Naive thymus-derived CD4-positive, alpha-beta T cell (primary cell): ENCODE measurements at regions of chr21 and their contacts with region 1.

Region 1: GRCh38 chr21:14737922-14738321 is 191.8 kb upstream of the SAMSN1 start:
- DNase-seq: peak in 7 of 9 donors; percentile 54 to 80 (median 72)
- ATAC-seq: peak; percentile 94
- H3K4me3 ChIP-seq: no peak overlapping the region
- H3K4me3 Mint-ChIP-seq: peak overlapping the region in 1 of 10 donors; percentile 23
- H3K27ac ChIP-seq: no peak overlapping the region
- H3K27ac Mint-ChIP-seq: peak overlapping the region in 1 of 9 donors; percentile 7
- H3K4me1 ChIP-seq: peaks cover 0 to 6% of the 10 kb centered on the region in 2 donors
- H3K4me1 Mint-ChIP-seq: peaks cover 0 to 43% (median 8%) of the 10 kb centered on the region in 7 donors
- H3K27me3 ChIP-seq: no peaks in the 10 kb centered on the region
- H3K27me3 Mint-ChIP-seq: peaks cover 0 to 5% (median 3%) of the 10 kb centered on the region in 5 donors

Region 2: GRCh38 chr21:14251336-14251735 is 486.6 kb before region 1 on chr21:
- CTCF ChIA-PET with region 1: no interaction called
- POLR2A ChIA-PET with region 1: no interaction called
- intact Hi-C with region 1: loop called in 1 of 2 experiments (anchors 1 kb)
- DNase-seq: no peak
- ATAC-seq: no peak
- H3K4me3 ChIP-seq: no peak overlapping the region
- H3K4me3 Mint-ChIP-seq: no peak overlapping the region
- H3K27ac ChIP-seq: no peak overlapping the region
- H3K27ac Mint-ChIP-seq: no peak overlapping the region
- H3K4me1 ChIP-seq: no peaks in the 10 kb centered on the region
- H3K4me1 Mint-ChIP-seq: peaks cover 3 to 9% (median 5%) of the 10 kb centered on the region in 7 donors
- H3K27me3 ChIP-seq: peaks cover 0 to 5% of the 10 kb centered on the region in 2 donors
- H3K27me3 Mint-ChIP-seq: peaks cover 5 to 23% (median 13%) of the 10 kb centered on the region in 5 donors

Region 3: GRCh38 chr21:14448784-14449183 is 289.1 kb before region 1 on chr21:
- CTCF ChIA-PET with region 1: interaction called, 3 read pairs
- POLR2A ChIA-PET with region 1: no interaction called
- intact Hi-C with region 1: loop called (anchors 2 to 5 kb)
- DNase-seq: peak in 4 of 9 donors; percentile 2 to 15 (median 5)
- ATAC-seq: no peak
- H3K4me3 ChIP-seq: no peak overlapping the region
- H3K4me3 Mint-ChIP-seq: no peak overlapping the region
- H3K27ac ChIP-seq: no peak overlapping the region
- H3K27ac Mint-ChIP-seq: peak overlapping the region in 1 of 9 donors; percentile 23
- H3K4me1 ChIP-seq: peaks cover 0 to 4% of the 10 kb centered on the region in 2 donors
- H3K4me1 Mint-ChIP-seq: peaks cover 0 to 46% (median 0%) of the 10 kb centered on the region in 7 donors
- H3K27me3 ChIP-seq: no peaks in the 10 kb centered on the region
- H3K27me3 Mint-ChIP-seq: no peaks in the 10 kb centered on the region

Region 4: DNA sequence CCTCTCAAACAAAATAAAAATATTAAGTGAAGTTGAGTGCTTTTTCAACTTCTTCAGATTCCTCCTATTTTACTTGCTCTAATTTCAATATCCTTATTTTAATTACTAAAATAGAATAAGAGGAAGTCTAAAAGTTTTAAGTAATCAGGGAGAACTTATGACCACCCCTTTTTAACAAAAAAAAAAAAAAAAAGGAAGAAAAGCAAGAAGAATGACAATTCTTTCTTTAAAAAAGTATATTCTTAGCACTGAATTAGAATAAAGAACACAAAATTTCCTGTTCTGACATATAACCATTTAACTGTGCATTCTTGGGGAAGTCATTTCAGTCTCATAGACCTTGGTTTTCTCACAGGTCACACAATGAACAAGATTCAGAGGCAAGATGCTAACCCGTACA is 238.6 kb before region 1 on chr21:
- CTCF ChIA-PET with region 1: no interaction called
- POLR2A ChIA-PET with region 1: no interaction called
- intact Hi-C with region 1: loop called in 1 of 2 experiments (anchors 2 kb)
- DNase-seq: no peak
- ATAC-seq: no peak
- H3K4me3 ChIP-seq: no peak overlapping the region
- H3K4me3 Mint-ChIP-seq: no peak overlapping the region
- H3K27ac ChIP-seq: no peak overlapping the region
- H3K27ac Mint-ChIP-seq: no peak overlapping the region
- H3K4me1 ChIP-seq: no peaks in the 10 kb centered on the region
- H3K4me1 Mint-ChIP-seq: peaks cover 0 to 33% (median 9%) of the 10 kb centered on the region in 7 donors
- H3K27me3 ChIP-seq: no peaks in the 10 kb centered on the region
- H3K27me3 Mint-ChIP-seq: no peaks in the 10 kb centered on the region

Region 5: DNA sequence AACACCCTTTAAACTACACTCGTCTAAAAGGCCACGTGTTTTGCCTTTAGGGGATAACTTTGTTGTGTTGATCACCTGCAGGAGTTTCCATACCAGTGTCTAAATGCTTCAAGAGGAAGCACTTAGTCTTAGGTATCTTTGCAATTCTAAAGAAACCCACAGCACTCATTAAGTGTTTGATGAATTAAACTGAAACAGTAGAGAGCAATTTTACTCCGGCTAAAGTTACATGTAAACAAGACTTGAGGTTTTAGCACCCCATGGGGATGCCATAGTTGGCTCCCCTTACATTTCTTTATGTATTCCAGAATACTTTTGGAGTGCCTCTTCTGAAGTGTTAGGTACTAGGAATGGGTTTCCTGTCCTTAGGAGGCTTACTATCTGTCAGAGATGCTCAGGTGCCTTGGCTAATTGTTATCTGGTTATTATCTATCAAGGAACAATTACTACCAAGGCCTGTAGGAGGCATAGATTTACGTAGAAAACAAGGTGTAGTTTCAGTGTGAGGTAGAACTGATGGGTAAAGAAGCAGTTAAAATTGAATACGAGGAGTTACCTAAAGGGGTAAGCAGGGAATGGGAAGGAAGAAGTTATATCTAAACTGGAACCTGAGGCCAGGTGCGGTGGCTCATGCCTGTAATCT is 15.0 kb before region 1 on chr21:
- CTCF ChIA-PET with region 1: interaction called, 5 read pairs
- POLR2A ChIA-PET with region 1: no interaction called
- intact Hi-C with region 1: loop called in 1 of 2 experiments (anchors 1 kb)
- DNase-seq: no peak
- ATAC-seq: no peak
- H3K4me3 ChIP-seq: no peak overlapping the region
- H3K4me3 Mint-ChIP-seq: no peak overlapping the region
- H3K27ac ChIP-seq: no peak overlapping the region
- H3K27ac Mint-ChIP-seq: peak overlapping the region in 1 of 9 donors; percentile 71
- H3K4me1 ChIP-seq: no peaks in the 10 kb centered on the region
- H3K4me1 Mint-ChIP-seq: peaks cover 0 to 31% (median 5%) of the 10 kb centered on the region in 7 donors
- H3K27me3 ChIP-seq: no peaks in the 10 kb centered on the region
- H3K27me3 Mint-ChIP-seq: no peaks in the 10 kb centered on the region

Region 6: GRCh38 chr21:15094706-15095105 is 356.8 kb after region 1 on chr21:
- CTCF ChIA-PET with region 1: no interaction called
- POLR2A ChIA-PET with region 1: no interaction called
- intact Hi-C with region 1: no loop called
- DNase-seq: no peak
- ATAC-seq: no peak
- H3K4me3 ChIP-seq: no peak overlapping the region
- H3K4me3 Mint-ChIP-seq: no peak overlapping the region
- H3K27ac ChIP-seq: no peak overlapping the region
- H3K27ac Mint-ChIP-seq: no peak overlapping the region
- H3K4me1 ChIP-seq: no peaks in the 10 kb centered on the region
- H3K4me1 Mint-ChIP-seq: no peaks in the 10 kb centered on the region
- H3K27me3 ChIP-seq: no peaks in the 10 kb centered on the region
- H3K27me3 Mint-ChIP-seq: peaks cover 0 to 4% (median 0%) of the 10 kb centered on the region in 5 donors

Region 7: GRCh38 chr21:15138490-15138889 is 400.6 kb after region 1 on chr21:
- CTCF ChIA-PET with region 1: no interaction called
- POLR2A ChIA-PET with region 1: no interaction called
- intact Hi-C with region 1: no loop called
- DNase-seq: no peak
- ATAC-seq: no peak
- H3K4me3 ChIP-seq: no peak overlapping the region
- H3K4me3 Mint-ChIP-seq: no peak overlapping the region
- H3K27ac ChIP-seq: no peak overlapping the region
- H3K27ac Mint-ChIP-seq: no peak overlapping the region
- H3K4me1 ChIP-seq: no peaks in the 10 kb centered on the region
- H3K4me1 Mint-ChIP-seq: peaks cover 0 to 2% (median 0%) of the 10 kb centered on the region in 7 donors
- H3K27me3 ChIP-seq: no peaks in the 10 kb centered on the region
- H3K27me3 Mint-ChIP-seq: peaks cover 4 to 25% (median 14%) of the 10 kb centered on the region in 5 donors